ENCODE measurements at regions of chr17 and their contacts with region 1.

Region 1: GRCh38 chr17:68457539-68458259 is 403 bp upstream of the WIPI1 start:
- DNase-seq: peak; percentile 98 to 99 (median 99)
- H3K4me3 ChIP-seq: peak overlapping the region; percentile 69
- H3K4me3 Mint-ChIP-seq: peak overlapping the region; percentile 87 to 91 (median 89)
- H3K27ac ChIP-seq: peak overlapping the region; percentile 64
- H3K27ac Mint-ChIP-seq: peak overlapping the region; percentile 57 to 98 (median 93)
- H3K4me1 ChIP-seq: peaks cover 53% of the 10 kb centered on the region
- H3K4me1 Mint-ChIP-seq: peaks cover 60 to 68% (median 64%) of the 10 kb centered on the region in 3 donors
- H3K27me3 ChIP-seq: no peaks in the 10 kb centered on the region
- H3K27me3 Mint-ChIP-seq: no peaks in the 10 kb centered on the region

Region 2: GRCh38 chr17:68247445-68248198 is 210.1 kb before region 1 on chr17 and contains the start of gene AMZ2:
- CTCF ChIA-PET with region 1: interaction called, 6 read pairs
- POLR2A ChIA-PET with region 1: interaction called, 16 read pairs
- DNase-seq: peak; percentile 95 to 99 (median 98)
- H3K4me3 ChIP-seq: peak within 1 kb of the TSS; percentile 97
- H3K4me3 Mint-ChIP-seq: peak within 1 kb of the TSS; percentile 87 to 98 (median 96)
- H3K27ac ChIP-seq: peak within 1 kb of the TSS; percentile 96
- H3K27ac Mint-ChIP-seq: peak within 1 kb of the TSS; percentile 96 to 100 (median 98)
- H3K4me1 ChIP-seq: peaks cover 34% of the 10 kb centered on the region
- H3K4me1 Mint-ChIP-seq: peaks cover 35 to 63% (median 53%) of the 10 kb centered on the region in 3 donors
- H3K27me3 ChIP-seq: no peaks in the 10 kb centered on the region
- H3K27me3 Mint-ChIP-seq: peaks cover 0 to 8% of the 10 kb centered on the region in 2 donors
- total RNA-seq, gene AMZ2: 113 to 118 TPM

Region 3: DNA sequence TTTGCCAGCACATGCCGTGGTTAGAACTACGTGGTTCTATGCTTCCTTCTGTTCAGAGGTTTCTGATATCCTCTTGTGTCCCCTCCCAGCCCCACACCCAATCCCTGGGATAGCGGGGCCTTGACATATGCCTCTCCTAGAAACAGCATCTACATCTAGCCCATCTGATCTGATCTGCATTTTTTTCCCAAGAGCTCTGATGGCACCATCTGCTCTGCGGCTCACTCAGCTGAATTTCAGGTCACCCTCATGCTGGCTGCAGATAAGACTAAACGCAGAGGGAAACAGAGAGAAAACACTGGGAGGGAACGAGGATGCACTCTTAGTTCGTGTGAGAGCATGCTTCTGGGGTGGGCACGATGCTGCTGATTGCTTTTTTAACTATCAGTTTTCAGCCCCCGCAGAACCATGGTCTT is 11.1 kb before region 1 on chr17:
- CTCF ChIA-PET with region 1: interaction called, 13 read pairs
- POLR2A ChIA-PET with region 1: interaction called, 4 read pairs
- DNase-seq: no peak
- H3K4me3 ChIP-seq: no peak overlapping the region
- H3K4me3 Mint-ChIP-seq: no peak overlapping the region
- H3K27ac ChIP-seq: no peak overlapping the region
- H3K27ac Mint-ChIP-seq: peak overlapping the region in 1 of 8 donors; percentile 33
- H3K4me1 ChIP-seq: no peaks in the 10 kb centered on the region
- H3K4me1 Mint-ChIP-seq: peaks cover 0 to 2% (median under 1%) of the 10 kb centered on the region in 3 donors
- H3K27me3 ChIP-seq: no peaks in the 10 kb centered on the region
- H3K27me3 Mint-ChIP-seq: peaks cover 0 to 1% of the 10 kb centered on the region in 2 donors

Region 4: GRCh38 chr17:68556556-68556955 is 98.9 kb after region 1 on chr17:
- CTCF ChIA-PET with region 1: no interaction called
- POLR2A ChIA-PET with region 1: no interaction called
- DNase-seq: no peak
- H3K4me3 ChIP-seq: no peak overlapping the region
- H3K4me3 Mint-ChIP-seq: no peak overlapping the region
- H3K27ac ChIP-seq: no peak overlapping the region
- H3K27ac Mint-ChIP-seq: no peak overlapping the region
- H3K4me1 ChIP-seq: no peaks in the 10 kb centered on the region
- H3K4me1 Mint-ChIP-seq: no peaks in the 10 kb centered on the region
- H3K27me3 ChIP-seq: no peaks in the 10 kb centered on the region
- H3K27me3 Mint-ChIP-seq: peaks cover 0 to 3% of the 10 kb centered on the region in 2 donors

Region 5: DNA sequence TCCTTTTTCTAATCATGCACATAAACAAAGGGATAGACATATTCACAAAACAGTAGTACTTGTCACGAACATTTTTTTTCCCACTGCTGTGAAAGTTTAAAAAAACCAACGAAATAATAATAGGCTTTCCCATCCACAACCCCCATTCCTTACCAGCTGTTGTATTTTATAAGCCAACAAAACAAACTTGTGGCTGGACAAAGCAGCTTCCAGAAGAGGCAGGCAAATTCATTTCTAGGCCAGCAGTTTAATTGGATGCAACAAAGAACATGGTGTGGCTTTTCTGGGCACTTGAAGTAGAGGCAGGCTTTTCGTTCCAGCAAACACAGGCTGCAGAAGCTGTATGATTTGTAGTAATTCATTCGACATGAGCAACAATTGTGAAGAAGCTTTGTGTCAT is 199.5 kb after region 1 on chr17:
- CTCF ChIA-PET with region 1: no interaction called
- POLR2A ChIA-PET with region 1: no interaction called
- DNase-seq: no peak
- H3K4me3 ChIP-seq: no peak overlapping the region
- H3K4me3 Mint-ChIP-seq: no peak overlapping the region
- H3K27ac ChIP-seq: no peak overlapping the region
- H3K27ac Mint-ChIP-seq: no peak overlapping the region
- H3K4me1 ChIP-seq: no peaks in the 10 kb centered on the region
- H3K4me1 Mint-ChIP-seq: no peaks in the 10 kb centered on the region
- H3K27me3 ChIP-seq: no peaks in the 10 kb centered on the region
- H3K27me3 Mint-ChIP-seq: peaks cover 6 to 30% of the 10 kb centered on the region in 2 donors

Measured in CD8-positive, alpha-beta memory T cell (primary cell).